ENCODE measurements at regions of chr1 and their contacts with region 1.

Region 1: GRCh38 chr1:205485338-205486228 is 18.9 kb upstream of the CDK18 start:
- H3K4me3 Mint-ChIP-seq: no peak overlapping the region
- H3K27ac Mint-ChIP-seq: no peak overlapping the region
- H3K4me1 Mint-ChIP-seq: no peaks in the 10 kb centered on the region
- H3K27me3 Mint-ChIP-seq: peaks cover 86% of the 10 kb centered on the region

Region 2: GRCh38 chr1:204975570-204976235 is 509.9 kb before region 1 on chr1:
- intact Hi-C with region 1: no loop called
- H3K4me3 Mint-ChIP-seq: no peak overlapping the region
- H3K27ac Mint-ChIP-seq: no peak overlapping the region
- H3K4me1 Mint-ChIP-seq: peaks cover 33% of the 10 kb centered on the region
- H3K27me3 Mint-ChIP-seq: peaks cover 19% of the 10 kb centered on the region

Region 3: DNA sequence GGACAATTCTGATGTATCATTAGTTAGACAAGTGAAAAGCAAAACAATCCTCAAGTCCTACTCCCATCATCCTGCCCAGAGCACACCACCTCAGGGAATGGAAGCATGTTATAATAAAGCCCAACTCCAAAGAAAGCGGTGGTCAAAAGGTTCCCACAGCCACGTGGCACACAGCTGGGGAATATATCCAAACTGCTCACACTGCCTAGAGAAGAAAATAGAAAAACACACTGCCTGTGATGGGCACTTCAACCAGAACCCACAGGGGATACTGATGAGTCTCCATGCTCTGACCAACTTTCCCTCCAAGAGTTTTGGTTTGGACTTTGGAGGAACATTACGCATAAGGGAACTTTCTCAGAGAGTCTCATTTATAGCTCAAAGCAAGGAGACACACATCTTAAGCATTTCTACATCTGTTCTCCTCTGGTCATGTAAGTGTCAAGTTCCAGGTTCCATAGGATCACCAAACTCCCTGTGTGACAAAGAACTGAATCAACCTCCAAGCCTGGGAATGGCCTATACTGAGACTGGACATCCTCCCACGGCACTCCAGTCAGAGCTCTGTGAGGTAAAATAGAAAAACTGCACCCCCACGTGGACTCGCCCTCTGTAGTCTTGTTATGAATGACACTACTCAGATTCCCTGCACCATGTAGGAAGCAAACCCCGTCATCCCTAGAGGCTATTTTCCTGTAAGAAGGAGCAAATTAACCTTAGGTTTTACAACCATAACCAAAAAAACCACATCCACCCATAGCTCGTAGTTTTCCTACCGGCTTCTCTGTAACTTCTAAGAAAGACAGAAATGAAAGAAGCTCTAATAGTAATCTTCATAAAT is 286.3 kb before region 1 on chr1:
- intact Hi-C with region 1: no loop called
- H3K4me3 Mint-ChIP-seq: no peak overlapping the region
- H3K27ac Mint-ChIP-seq: peak overlapping the region; percentile 22
- H3K4me1 Mint-ChIP-seq: peaks cover 42% of the 10 kb centered on the region
- H3K27me3 Mint-ChIP-seq: no peaks in the 10 kb centered on the region

Region 4: GRCh38 chr1:205354259-205354904 is 131.2 kb before region 1 on chr1:
- intact Hi-C with region 1: loop called (anchors 2 kb)
- H3K4me3 Mint-ChIP-seq: no peak overlapping the region
- H3K27ac Mint-ChIP-seq: no peak overlapping the region
- H3K4me1 Mint-ChIP-seq: peaks cover 8% of the 10 kb centered on the region
- H3K27me3 Mint-ChIP-seq: peaks cover 33% of the 10 kb centered on the region

Region 5: GRCh38 chr1:205396967-205397616 is 88.5 kb before region 1 on chr1:
- intact Hi-C with region 1: loop called (anchors 1 kb)
- H3K4me3 Mint-ChIP-seq: no peak overlapping the region
- H3K27ac Mint-ChIP-seq: no peak overlapping the region
- H3K4me1 Mint-ChIP-seq: no peaks in the 10 kb centered on the region
- H3K27me3 Mint-ChIP-seq: peaks cover 25% of the 10 kb centered on the region

Measured in dendritic cell treated with granulocyte-macrophage colony-stimulating factor and Interleukin-4, amounts not matched to agents 40 ng/mL and 50 ng/mL, for 4 days (primary cell).